CD4-positive, alpha-beta memory T cell (primary cell): ENCODE measurements at regions of chr5 and their contacts with region 1.

Region 1: GRCh38 chr5:52787600-52788504 is at the starts of genes ITGA1 and PELO:
- DNase-seq: peak; percentile 49 to 64 (median 53)
- H3K4me3 ChIP-seq: peak within 1 kb of the TSS; percentile 55 to 65
- H3K4me3 Mint-ChIP-seq: peak within 1 kb of the TSS; percentile 89 to 95 (median 92)
- H3K27ac ChIP-seq: peak within 1 kb of the TSS; percentile 60
- H3K27ac Mint-ChIP-seq: peak within 1 kb of the TSS; percentile 42 to 89 (median 59)
- H3K4me1 ChIP-seq: peaks cover 15% of the 10 kb centered on the region
- H3K4me1 Mint-ChIP-seq: peaks cover 17 to 36% (median 29%) of the 10 kb centered on the region in 4 donors
- H3K27me3 ChIP-seq: no peaks in the 10 kb centered on the region
- H3K27me3 Mint-ChIP-seq: peaks cover 2% of the 10 kb centered on the region in 2 donors
- total RNA-seq, gene ITGA1: 4.2 to 5.8 TPM
- total RNA-seq, gene PELO: 11.9 to 12.4 TPM

Region 2: DNA sequence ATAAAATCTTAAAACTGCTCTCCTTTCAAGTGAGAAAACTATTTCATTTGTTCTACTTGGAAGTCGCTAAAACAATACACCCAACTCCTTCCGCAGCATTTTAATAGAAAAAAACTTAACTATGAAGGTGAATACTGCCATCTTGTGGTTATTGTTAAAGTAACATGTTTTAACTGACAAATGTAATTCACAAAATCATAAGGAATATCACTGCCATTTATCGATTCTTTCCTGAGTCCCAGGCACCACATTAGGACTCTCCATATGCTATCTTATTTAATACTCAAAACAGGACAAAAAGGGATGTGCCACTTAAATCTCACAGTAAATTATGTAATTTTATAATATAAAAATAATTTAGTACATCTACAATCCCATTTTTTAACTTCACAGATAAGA is 130.6 kb before region 1 on chr5:
- CTCF ChIA-PET with region 1: no interaction called
- POLR2A ChIA-PET with region 1: no interaction called
- intact Hi-C with region 1: no loop called
- DNase-seq: peak in 4 of 5 donors; percentile 45 to 53 (median 51)
- H3K4me3 ChIP-seq: no peak overlapping the region
- H3K4me3 Mint-ChIP-seq: no peak overlapping the region
- H3K27ac ChIP-seq: no peak overlapping the region
- H3K27ac Mint-ChIP-seq: no peak overlapping the region
- H3K4me1 ChIP-seq: peaks cover 4% of the 10 kb centered on the region
- H3K4me1 Mint-ChIP-seq: no peaks in the 10 kb centered on the region
- H3K27me3 ChIP-seq: no peaks in the 10 kb centered on the region
- H3K27me3 Mint-ChIP-seq: peaks cover 3 to 12% of the 10 kb centered on the region in 2 donors

Region 3: DNA sequence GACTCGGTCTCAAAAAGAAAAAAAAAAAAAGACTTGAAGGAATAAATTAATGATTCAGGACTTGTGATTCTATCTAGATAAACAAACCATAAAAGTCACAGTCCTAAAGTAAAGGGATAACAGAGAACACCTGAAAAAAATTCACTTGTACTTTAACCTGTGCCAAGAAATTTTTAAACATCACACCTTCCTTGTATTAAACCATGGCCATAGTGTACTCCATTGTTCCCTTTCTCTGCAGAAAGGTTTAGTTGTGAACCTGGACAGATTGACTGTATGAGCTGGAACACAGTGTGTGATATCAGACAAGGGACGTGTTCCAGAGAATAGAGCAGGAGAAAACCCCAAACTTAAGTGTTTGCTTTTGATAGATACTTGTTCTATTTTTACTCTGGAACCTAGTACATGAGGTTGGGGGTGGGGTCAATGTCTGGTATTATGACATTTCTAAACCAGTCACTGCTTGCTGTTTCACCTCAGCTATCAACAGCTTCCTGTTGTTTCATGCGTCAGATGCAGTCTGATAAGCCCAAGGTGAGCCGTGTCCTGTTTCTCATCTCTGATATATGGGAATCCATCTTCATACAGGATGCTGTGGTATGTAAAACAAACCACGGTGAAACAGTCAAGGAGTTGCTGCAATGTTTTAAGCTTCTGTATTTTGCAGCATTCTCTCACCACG is 62.6 kb before region 1 on chr5:
- CTCF ChIA-PET with region 1: interaction called, 6 read pairs
- POLR2A ChIA-PET with region 1: interaction called, 17 read pairs
- intact Hi-C with region 1: loop called (anchors 1 kb)
- DNase-seq: peak; percentile 81 to 94 (median 90)
- H3K4me3 ChIP-seq: peak overlapping the region in 1 of 2 donors; percentile 18
- H3K4me3 Mint-ChIP-seq: peak overlapping the region; percentile 78 to 90 (median 88)
- H3K27ac ChIP-seq: peak overlapping the region; percentile 41
- H3K27ac Mint-ChIP-seq: peak overlapping the region; percentile 89 to 98 (median 97)
- H3K4me1 ChIP-seq: peaks cover 44% of the 10 kb centered on the region
- H3K4me1 Mint-ChIP-seq: peaks cover 44 to 74% (median 60%) of the 10 kb centered on the region in 4 donors
- H3K27me3 ChIP-seq: no peaks in the 10 kb centered on the region
- H3K27me3 Mint-ChIP-seq: no peaks in the 10 kb centered on the region

Region 4: GRCh38 chr5:52771343-52772039 is 16.4 kb before region 1 on chr5:
- CTCF ChIA-PET with region 1: interaction called, 14 read pairs
- POLR2A ChIA-PET with region 1: interaction called, 10 read pairs
- intact Hi-C with region 1: no loop called
- DNase-seq: peak in 4 of 5 donors; percentile 25 to 40 (median 29)
- H3K4me3 ChIP-seq: no peak overlapping the region
- H3K4me3 Mint-ChIP-seq: peak overlapping the region in 7 of 8 donors; percentile 29 to 84 (median 63)
- H3K27ac ChIP-seq: peak overlapping the region; percentile 16
- H3K27ac Mint-ChIP-seq: peak overlapping the region; percentile 24 to 87 (median 81)
- H3K4me1 ChIP-seq: peaks cover 50% of the 10 kb centered on the region
- H3K4me1 Mint-ChIP-seq: peaks cover 31 to 45% (median 42%) of the 10 kb centered on the region in 4 donors
- H3K27me3 ChIP-seq: no peaks in the 10 kb centered on the region
- H3K27me3 Mint-ChIP-seq: peaks cover 0 to 2% of the 10 kb centered on the region in 2 donors

Region 5: DNA sequence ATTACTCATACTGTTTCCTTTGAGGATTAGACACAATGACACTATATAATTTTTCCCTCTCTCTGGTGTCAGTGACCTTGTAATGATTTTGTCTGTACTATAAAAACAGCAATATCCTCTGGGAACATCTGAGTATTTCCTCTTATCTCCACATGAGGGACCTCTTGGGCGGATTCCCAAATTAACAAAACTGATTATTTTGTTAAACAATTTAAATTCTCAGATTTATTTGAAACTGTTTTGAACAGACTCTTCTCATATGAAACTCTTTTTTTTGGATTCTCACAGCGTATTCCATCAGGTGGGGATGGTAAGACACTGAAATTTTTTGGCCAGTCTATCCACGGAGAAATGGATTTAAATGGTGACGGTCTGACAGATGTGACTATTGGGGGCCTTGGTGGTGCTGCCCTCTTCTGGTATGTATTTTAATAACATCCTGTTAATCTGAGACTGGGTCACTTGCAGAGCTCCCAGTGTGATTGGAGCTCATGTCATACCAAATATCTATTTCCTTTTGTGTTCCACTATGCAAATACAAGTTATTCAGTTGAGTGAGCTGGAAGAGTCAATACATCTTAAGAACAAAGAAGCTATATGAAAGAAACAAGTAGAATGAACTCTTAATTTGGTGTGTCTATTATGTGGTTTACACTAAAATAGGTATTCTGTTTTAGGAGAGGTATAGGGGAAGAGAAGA is 127.5 kb after region 1 on chr5:
- CTCF ChIA-PET with region 1: interaction called, 23 read pairs
- POLR2A ChIA-PET with region 1: no interaction called
- intact Hi-C with region 1: loop called (anchors 1 kb)
- DNase-seq: peak; percentile 41 to 72 (median 67)
- H3K4me3 ChIP-seq: no peak overlapping the region
- H3K4me3 Mint-ChIP-seq: peak overlapping the region in 7 of 8 donors; percentile 58 to 77 (median 74)
- H3K27ac ChIP-seq: no peak overlapping the region
- H3K27ac Mint-ChIP-seq: peak overlapping the region in 1 of 7 donors; percentile 39
- H3K4me1 ChIP-seq: peaks cover 5% of the 10 kb centered on the region
- H3K4me1 Mint-ChIP-seq: peaks cover 0 to 9% (median 2%) of the 10 kb centered on the region in 4 donors
- H3K27me3 ChIP-seq: no peaks in the 10 kb centered on the region
- H3K27me3 Mint-ChIP-seq: no peaks in the 10 kb centered on the region